ENCODE measurements at regions of chr1 and their contacts with region 1.

Region 1: GRCh38 chr1:156892190-156893047 is 1.1 kb upstream of the PEAR1 start:
- DNase-seq: peak; percentile 95
- ATAC-seq: peak; percentile 97
- H3K4me3 Mint-ChIP-seq: peak overlapping the region; percentile 55
- H3K27ac Mint-ChIP-seq: no peak overlapping the region
- H3K4me1 Mint-ChIP-seq: peaks cover 14% of the 10 kb centered on the region
- H3K27me3 Mint-ChIP-seq: peaks cover 39% of the 10 kb centered on the region

Region 2: GRCh38 chr1:156551866-156552265 is 340.6 kb before region 1 on chr1:
- CTCF ChIA-PET with region 1: no interaction called
- POLR2A ChIA-PET with region 1: no interaction called
- intact Hi-C with region 1: no loop called
- DNase-seq: no peak
- ATAC-seq: no peak
- H3K4me3 Mint-ChIP-seq: no peak overlapping the region
- H3K27ac Mint-ChIP-seq: no peak overlapping the region
- H3K4me1 Mint-ChIP-seq: peaks cover 4% of the 10 kb centered on the region
- H3K27me3 Mint-ChIP-seq: no peaks in the 10 kb centered on the region

Region 3: GRCh38 chr1:156797212-156797871 is 95.1 kb before region 1 on chr1:
- CTCF ChIA-PET with region 1: interaction called, 61 read pairs
- POLR2A ChIA-PET with region 1: no interaction called
- intact Hi-C with region 1: loop called (anchors 1 kb)
- DNase-seq: peak; percentile 75
- ATAC-seq: peak; percentile 84
- H3K4me3 Mint-ChIP-seq: no peak overlapping the region
- H3K27ac Mint-ChIP-seq: no peak overlapping the region
- H3K4me1 Mint-ChIP-seq: peaks cover 7% of the 10 kb centered on the region
- H3K27me3 Mint-ChIP-seq: no peaks in the 10 kb centered on the region

Region 4: DNA sequence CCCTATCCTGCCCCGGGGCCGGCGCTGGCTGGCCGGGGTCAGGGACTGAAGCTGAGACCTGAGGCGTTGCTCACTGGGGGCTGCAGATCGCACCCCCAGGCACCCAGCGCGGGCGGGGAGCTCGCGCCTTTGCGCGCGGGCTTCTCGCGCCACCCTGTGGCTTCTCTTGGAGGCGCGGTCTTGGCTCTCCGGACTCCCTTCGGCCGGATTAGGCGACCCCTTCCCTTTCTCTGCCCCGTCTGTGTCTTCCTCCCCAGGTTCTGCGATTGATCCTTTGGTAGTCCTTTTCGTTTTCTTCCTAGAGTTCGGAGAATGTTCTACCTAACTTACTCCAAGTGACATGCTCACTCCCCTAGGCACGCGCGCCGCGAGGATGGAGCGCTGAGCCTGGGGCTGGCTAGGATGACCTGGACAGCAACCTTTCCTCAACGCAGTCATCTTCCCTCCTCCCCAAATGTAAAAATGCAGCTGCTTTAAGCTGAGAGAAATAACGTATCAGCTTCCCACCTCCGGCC is 32.2 kb before region 1 on chr1:
- CTCF ChIA-PET with region 1: interaction called, 40 read pairs
- POLR2A ChIA-PET with region 1: no interaction called
- intact Hi-C with region 1: loop called in 1 of 2 experiments (anchors 1 kb)
- DNase-seq: peak; percentile 77
- ATAC-seq: peak; percentile 47
- H3K4me3 Mint-ChIP-seq: peak overlapping the region; percentile 56
- H3K27ac Mint-ChIP-seq: no peak overlapping the region
- H3K4me1 Mint-ChIP-seq: peaks cover 25% of the 10 kb centered on the region
- H3K27me3 Mint-ChIP-seq: peaks cover 45% of the 10 kb centered on the region

Region 5: DNA sequence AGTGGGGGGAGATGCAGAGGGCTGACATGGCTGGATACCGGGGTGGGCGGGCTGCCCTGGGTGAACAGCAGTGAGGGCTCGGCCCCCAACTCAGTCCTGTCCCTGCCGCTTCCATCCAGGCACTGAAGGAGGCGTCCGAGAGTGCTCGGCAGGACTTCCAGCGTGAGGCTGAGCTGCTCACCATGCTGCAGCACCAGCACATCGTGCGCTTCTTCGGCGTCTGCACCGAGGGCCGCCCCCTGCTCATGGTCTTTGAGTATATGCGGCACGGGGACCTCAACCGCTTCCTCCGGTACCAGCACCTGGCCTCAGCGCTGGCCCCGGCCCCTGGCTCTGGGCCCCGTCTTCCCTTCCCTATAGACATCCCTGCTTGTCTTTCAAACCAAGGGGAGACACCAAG is 16.1 kb before region 1 on chr1:
- CTCF ChIA-PET with region 1: interaction called, 12 read pairs
- POLR2A ChIA-PET with region 1: no interaction called
- intact Hi-C with region 1: no loop called
- DNase-seq: no peak
- ATAC-seq: no peak
- H3K4me3 Mint-ChIP-seq: no peak overlapping the region
- H3K27ac Mint-ChIP-seq: no peak overlapping the region
- H3K4me1 Mint-ChIP-seq: no peaks in the 10 kb centered on the region
- H3K27me3 Mint-ChIP-seq: peaks cover 6% of the 10 kb centered on the region

Region 6: GRCh38 chr1:156920233-156921052 is 28.0 kb after region 1 on chr1 and contains the start of gene LRRC71:
- CTCF ChIA-PET with region 1: interaction called, 76 read pairs
- POLR2A ChIA-PET with region 1: no interaction called
- intact Hi-C with region 1: loop called in 1 of 2 experiments (anchors 1 kb)
- DNase-seq: peak; percentile 87
- ATAC-seq: peak; percentile 92
- H3K4me3 Mint-ChIP-seq: no peak within 1 kb of the TSS
- H3K27ac Mint-ChIP-seq: no peak within 1 kb of the TSS
- H3K4me1 Mint-ChIP-seq: peaks cover 6% of the 10 kb centered on the region
- H3K27me3 Mint-ChIP-seq: peaks cover 57% of the 10 kb centered on the region
- total RNA-seq, gene LRRC71: not detected

Region 7: DNA sequence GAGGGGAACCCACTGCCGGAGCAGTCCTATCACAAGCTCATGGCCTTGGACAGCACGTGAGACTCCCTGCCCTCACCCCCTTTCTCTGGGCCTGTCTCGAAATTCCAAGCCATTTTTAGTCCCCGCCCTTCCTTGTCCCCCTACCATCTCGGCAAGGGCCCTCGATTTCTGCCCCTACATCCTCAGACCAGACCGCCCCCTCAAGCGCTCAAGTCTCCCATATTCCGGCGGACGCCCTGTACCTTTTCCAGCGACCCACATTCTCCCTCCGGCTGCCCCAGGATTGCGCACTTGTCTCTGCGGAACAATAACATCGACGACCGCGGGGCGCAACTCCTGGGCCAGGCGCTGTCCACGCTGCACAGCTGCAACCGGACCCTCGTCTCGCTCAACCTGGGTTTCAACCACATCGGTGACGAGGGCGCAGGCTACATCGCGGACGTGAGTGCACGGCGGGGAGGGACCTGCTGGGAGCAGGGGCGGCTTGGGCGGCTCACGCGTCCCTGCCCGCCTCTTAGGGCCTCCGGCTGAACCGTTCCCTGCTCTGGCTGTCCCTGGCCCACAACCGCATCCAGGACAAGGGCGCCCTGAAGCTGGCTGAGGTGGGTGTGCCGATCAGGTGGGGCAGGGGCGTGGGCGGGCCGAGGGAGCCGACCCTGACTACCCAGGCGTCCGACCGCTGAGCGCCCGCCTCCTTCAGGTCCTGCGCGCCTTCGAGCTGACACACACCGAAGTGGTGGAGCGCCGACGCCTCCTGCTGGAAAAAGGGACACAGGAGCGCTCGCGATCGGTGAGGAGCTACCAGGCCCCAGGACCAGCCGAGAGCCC is 35.0 kb after region 1 on chr1:
- CTCF ChIA-PET with region 1: interaction called, 76 read pairs
- POLR2A ChIA-PET with region 1: no interaction called
- intact Hi-C with region 1: loop called (anchors 1 to 2 kb)
- DNase-seq: peak; percentile 87
- ATAC-seq: peak; percentile 76
- H3K4me3 Mint-ChIP-seq: no peak overlapping the region
- H3K27ac Mint-ChIP-seq: no peak overlapping the region
- H3K4me1 Mint-ChIP-seq: peaks cover 25% of the 10 kb centered on the region
- H3K27me3 Mint-ChIP-seq: peaks cover 64% of the 10 kb centered on the region

Region 8: DNA sequence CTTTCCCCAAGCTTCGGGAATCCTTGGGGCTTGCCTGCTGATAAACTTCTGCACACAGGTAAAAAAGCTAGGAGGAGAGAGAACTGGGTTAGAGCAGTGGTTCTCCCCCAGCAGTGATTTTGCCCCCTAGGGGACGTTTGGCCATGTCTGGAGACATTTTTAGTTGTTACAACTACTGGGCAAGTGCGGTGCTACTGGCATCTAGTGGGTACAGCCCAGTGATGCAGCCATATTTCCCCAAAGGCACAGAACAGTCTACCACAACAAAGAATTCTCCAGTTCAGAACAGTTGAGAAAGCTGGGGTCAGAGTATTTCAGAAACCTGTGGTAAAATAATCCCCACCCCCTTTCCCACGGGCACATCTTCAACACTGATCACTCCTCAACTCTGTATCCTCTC is 69.3 kb after region 1 on chr1:
- CTCF ChIA-PET with region 1: interaction called, 3 read pairs
- POLR2A ChIA-PET with region 1: no interaction called
- intact Hi-C with region 1: loop called (anchors 1 to 5 kb)
- DNase-seq: peak; percentile 67
- ATAC-seq: peak; percentile 91
- H3K4me3 Mint-ChIP-seq: no peak overlapping the region
- H3K27ac Mint-ChIP-seq: no peak overlapping the region
- H3K4me1 Mint-ChIP-seq: peaks cover 33% of the 10 kb centered on the region
- H3K27me3 Mint-ChIP-seq: no peaks in the 10 kb centered on the region